ENCODE measurements at regions of chr4 and their contacts with region 1.

Region 1: DNA sequence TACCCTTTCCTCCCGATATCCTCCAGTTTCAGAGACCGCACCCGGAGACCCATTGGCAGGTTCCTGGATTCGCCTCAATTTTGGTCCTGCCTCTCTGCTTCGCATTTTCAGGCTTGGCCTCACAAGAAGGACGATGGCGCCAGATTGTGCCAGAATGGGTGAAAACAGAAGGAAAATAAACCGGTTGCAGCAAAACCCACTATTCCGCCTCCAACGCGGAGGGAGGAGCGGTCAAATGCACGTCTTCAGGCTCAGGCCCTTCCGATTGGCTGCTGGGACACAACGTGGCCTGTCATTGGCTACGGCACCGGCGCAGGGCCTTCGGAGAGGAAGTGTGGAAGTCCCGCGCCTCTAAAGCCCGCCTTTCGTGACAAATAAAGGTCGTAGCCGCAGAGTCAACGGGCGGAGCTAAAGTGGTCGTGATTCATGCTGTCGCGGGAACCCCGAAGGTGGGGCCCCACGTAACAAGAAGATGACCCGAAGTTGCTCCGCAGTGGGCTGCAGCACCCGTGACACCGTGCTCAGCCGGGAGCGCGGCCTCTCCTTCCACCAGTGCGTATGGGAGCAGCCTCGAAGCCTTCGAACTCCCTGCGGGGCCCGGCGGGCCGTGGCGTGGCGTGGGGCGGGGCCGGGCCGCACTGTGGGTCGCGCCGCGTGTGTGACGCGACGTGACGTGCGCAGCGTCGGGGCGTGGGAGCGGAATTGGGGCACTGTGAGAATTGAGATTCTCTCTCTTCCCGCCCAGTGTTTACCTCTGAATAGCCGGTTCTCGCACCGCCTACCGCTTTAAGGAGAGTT is at the start of gene THAP9:
- H3K4me3 Mint-ChIP-seq: no peak within 1 kb of the TSS
- H3K27ac Mint-ChIP-seq: no peak within 1 kb of the TSS
- H3K4me1 Mint-ChIP-seq: peaks cover 11% of the 10 kb centered on the region
- H3K27me3 Mint-ChIP-seq: no peaks in the 10 kb centered on the region

Region 2: DNA sequence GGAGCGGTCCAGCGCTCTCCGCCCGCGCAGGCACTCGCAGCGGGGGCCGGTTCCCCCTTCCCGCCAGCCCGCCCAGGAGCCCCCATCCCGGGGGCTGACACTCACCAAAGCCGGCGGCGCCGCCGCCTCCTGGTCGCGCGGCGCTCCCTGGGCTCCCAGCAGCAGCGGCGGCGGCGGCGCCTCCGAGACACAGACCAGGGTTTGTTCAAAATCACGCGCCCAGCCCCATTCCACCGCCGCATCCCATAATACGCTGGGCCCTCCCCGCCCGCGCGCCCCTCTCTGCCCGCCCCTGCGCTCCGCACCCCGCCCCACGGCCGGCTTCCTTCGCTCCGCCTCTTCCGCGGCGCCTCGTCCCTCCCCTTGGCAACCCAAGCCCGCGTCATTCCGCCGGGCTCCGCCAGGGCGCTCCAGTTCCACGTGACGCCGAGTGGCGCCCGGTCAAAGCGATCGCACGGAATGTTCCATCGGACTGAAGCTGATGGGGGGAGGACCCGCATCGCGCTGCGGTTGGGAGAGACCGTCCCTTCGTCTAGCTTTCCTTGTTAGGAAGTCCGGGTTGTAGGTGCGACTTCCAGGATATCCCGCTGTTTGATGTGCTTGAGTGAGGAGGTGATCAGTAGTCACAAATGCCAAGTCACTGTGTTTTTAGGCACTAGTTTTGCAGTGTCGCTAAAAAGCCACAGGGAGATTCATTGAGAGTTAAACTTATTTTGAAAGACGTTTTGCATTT is 112.3 kb after region 1 on chr4:
- intact Hi-C with region 1: loop called (anchors 2 kb)
- H3K4me3 Mint-ChIP-seq: peak overlapping the region; percentile 86
- H3K27ac Mint-ChIP-seq: peak overlapping the region; percentile 95
- H3K4me1 Mint-ChIP-seq: peaks cover 33% of the 10 kb centered on the region
- H3K27me3 Mint-ChIP-seq: no peaks in the 10 kb centered on the region

Measured in dendritic cell treated with granulocyte-macrophage colony-stimulating factor and Interleukin-4, amounts not matched to agents 40 ng/mL and 50 ng/mL, for 4 days (primary cell).